Gastrocnemius medialis (tissue), 4 donors: ENCODE measurements at regions of chr4 and their contacts with region 1.

Region 1: GRCh38 chr4:19614171-19614570 is 637.5 kb upstream of the SLIT2 start:
- DNase-seq: no peak
- ATAC-seq: no peak
- H3K4me3 ChIP-seq: no peak overlapping the region
- H3K27ac ChIP-seq: no peak overlapping the region
- H3K4me1 ChIP-seq: no peaks in the 10 kb centered on the region
- H3K27me3 ChIP-seq: no peaks in the 10 kb centered on the region
- CTCF ChIP-seq: no peak
- POLR2A ChIP-seq: no peak

Region 2: DNA sequence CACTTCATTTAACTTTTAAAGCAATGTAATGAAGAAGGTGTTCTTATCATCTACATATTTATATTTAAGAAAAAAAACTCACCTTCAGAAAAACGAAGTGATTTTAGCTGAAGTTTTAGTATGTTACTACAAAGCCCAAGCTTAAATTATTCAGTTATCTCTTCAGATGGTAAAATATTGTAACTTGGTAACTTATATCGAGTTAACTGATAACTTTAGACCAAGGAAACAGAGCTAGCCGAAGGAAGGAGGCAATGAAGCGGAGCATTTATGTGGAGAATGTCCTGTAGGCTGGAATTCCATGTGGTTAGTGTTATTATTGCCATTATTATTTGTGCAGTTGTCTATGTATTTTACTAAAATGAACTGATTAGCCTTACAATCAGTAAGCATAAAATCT is 490.5 kb before region 1 on chr4:
- in situ Hi-C with region 1: no loop called
- intact Hi-C with region 1: no loop called
- DNase-seq: no peak
- ATAC-seq: no peak
- H3K4me3 ChIP-seq: no peak overlapping the region
- H3K27ac ChIP-seq: no peak overlapping the region
- H3K4me1 ChIP-seq: no peaks in the 10 kb centered on the region
- H3K27me3 ChIP-seq: no peaks in the 10 kb centered on the region
- CTCF ChIP-seq: no peak
- POLR2A ChIP-seq: no peak

Region 3: GRCh38 chr4:19239565-19239964 is 374.6 kb before region 1 on chr4:
- in situ Hi-C with region 1: no loop called
- intact Hi-C with region 1: no loop called
- DNase-seq: no peak
- ATAC-seq: no peak
- H3K4me3 ChIP-seq: no peak overlapping the region
- H3K27ac ChIP-seq: no peak overlapping the region
- H3K4me1 ChIP-seq: no peaks in the 10 kb centered on the region
- H3K27me3 ChIP-seq: no peaks in the 10 kb centered on the region
- CTCF ChIP-seq: no peak
- POLR2A ChIP-seq: no peak

Region 4: DNA sequence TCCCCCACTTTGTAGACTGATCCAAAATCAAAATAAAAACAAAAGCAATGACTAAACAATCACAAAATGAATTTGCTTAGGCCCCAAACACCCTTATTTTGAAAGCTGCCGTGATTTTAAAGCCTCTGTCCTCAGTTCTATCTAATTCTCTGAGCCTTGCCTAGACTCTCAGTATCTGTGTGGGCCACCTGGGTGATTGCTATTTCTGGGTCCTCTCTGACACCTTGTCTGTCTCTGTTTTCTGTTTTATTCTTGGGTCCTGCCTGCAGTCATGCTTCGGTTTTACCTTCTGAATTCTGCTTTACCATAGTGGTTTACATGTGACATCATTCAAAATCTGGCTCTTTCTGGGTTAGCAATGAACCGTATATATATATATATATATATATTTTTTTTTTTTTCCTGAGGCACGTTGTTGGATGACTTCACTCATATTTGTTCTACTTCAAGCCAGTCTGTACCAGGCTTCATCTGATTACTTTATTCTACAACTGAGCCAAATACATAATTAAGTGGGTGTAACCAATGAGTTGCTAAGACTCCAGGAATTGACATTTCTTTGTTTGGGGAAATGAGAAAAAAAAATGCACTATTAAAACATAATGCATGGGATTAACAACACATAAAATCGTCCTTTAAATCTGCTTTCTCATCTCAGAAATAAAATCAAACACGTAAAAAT is 73.2 kb before region 1 on chr4:
- in situ Hi-C with region 1: loop called in 1 of 4 experiments (anchors 10 kb)
- intact Hi-C with region 1: no loop called
- DNase-seq: no peak
- ATAC-seq: no peak
- H3K4me3 ChIP-seq: no peak overlapping the region
- H3K27ac ChIP-seq: no peak overlapping the region
- H3K4me1 ChIP-seq: no peaks in the 10 kb centered on the region
- H3K27me3 ChIP-seq: no peaks in the 10 kb centered on the region
- CTCF ChIP-seq: no peak
- POLR2A ChIP-seq: no peak

Region 5: GRCh38 chr4:19675172-19675811 is 61.1 kb after region 1 on chr4:
- in situ Hi-C with region 1: no loop called
- intact Hi-C with region 1: no loop called
- DNase-seq: no peak
- ATAC-seq: no peak
- H3K4me3 ChIP-seq: no peak overlapping the region
- H3K27ac ChIP-seq: no peak overlapping the region
- H3K4me1 ChIP-seq: no peaks in the 10 kb centered on the region
- H3K27me3 ChIP-seq: no peaks in the 10 kb centered on the region
- CTCF ChIP-seq: no peak
- POLR2A ChIP-seq: no peak